Psoas muscle (tissue), 8 donors: ENCODE measurements at regions of chr9 and their contacts with region 1.

Region 1: DNA sequence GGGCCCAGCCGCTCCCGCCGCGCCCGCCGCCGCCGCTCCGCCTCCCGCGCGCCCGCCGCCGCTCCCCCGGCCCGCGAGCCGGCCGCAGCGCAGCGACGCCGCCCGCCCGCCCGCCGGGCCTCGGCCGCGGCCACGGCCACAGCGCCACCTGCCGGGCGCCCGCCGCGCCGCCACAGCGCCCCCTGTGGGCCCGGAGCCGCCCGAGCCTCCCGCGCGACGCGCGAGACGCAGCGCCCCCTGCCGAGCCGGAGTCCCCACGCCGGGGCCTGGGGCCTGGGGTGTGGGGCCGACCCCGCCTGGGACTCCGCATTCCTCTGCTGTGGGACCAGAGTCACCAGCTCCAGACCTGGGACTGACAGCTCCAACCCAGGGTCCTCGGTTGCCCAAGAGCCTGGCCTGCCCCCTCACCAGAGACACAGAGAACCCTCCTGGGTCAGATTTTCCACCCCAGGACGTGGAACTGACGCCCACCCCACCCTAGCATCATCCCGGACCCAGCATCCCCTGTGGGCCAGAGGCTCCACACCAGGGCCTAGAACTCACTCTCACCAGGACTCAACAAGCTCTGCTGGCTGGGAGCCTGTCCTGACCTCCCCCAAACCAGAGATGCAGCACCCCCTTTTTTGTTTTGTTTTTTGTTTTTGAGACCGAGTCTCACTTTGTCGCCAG is at the start of gene RAPGEF1:
- DNase-seq: peak; percentile 80 to 90
- ATAC-seq: peak; percentile 77 to 84 (median 82)
- H3K4me3 ChIP-seq: peak within 1 kb of the TSS; percentile 71
- H3K27ac ChIP-seq: peak within 1 kb of the TSS; percentile 89
- H3K4me1 ChIP-seq: peaks cover 47% of the 10 kb centered on the region
- H3K27me3 ChIP-seq: no peaks in the 10 kb centered on the region
- CTCF ChIP-seq: peak; percentile 93
- total RNA-seq, gene RAPGEF1: 234 to 319 (median 272) TPM

Region 2: GRCh38 chr9:131349881-131350563 is 390.1 kb before region 1 on chr9:
- intact Hi-C with region 1: loop called (anchors 5 to 10 kb)
- DNase-seq: peak; percentile 89 to 94
- ATAC-seq: peak; percentile 85 to 95 (median 86)
- H3K4me3 ChIP-seq: peak overlapping the region; percentile 53
- H3K27ac ChIP-seq: no peak overlapping the region
- H3K4me1 ChIP-seq: peaks cover 17% of the 10 kb centered on the region
- H3K27me3 ChIP-seq: no peaks in the 10 kb centered on the region
- CTCF ChIP-seq: peak; percentile 85

Region 3: GRCh38 chr9:131366761-131367401 is 373.2 kb before region 1 on chr9:
- intact Hi-C with region 1: loop called in 1 of 2 experiments (anchors 10 kb)
- DNase-seq: no peak
- ATAC-seq: peak; percentile 52 to 71 (median 66)
- H3K4me3 ChIP-seq: no peak overlapping the region
- H3K27ac ChIP-seq: no peak overlapping the region
- H3K4me1 ChIP-seq: peaks cover under 1% of the 10 kb centered on the region
- H3K27me3 ChIP-seq: no peaks in the 10 kb centered on the region
- CTCF ChIP-seq: peak; percentile 21

Region 4: DNA sequence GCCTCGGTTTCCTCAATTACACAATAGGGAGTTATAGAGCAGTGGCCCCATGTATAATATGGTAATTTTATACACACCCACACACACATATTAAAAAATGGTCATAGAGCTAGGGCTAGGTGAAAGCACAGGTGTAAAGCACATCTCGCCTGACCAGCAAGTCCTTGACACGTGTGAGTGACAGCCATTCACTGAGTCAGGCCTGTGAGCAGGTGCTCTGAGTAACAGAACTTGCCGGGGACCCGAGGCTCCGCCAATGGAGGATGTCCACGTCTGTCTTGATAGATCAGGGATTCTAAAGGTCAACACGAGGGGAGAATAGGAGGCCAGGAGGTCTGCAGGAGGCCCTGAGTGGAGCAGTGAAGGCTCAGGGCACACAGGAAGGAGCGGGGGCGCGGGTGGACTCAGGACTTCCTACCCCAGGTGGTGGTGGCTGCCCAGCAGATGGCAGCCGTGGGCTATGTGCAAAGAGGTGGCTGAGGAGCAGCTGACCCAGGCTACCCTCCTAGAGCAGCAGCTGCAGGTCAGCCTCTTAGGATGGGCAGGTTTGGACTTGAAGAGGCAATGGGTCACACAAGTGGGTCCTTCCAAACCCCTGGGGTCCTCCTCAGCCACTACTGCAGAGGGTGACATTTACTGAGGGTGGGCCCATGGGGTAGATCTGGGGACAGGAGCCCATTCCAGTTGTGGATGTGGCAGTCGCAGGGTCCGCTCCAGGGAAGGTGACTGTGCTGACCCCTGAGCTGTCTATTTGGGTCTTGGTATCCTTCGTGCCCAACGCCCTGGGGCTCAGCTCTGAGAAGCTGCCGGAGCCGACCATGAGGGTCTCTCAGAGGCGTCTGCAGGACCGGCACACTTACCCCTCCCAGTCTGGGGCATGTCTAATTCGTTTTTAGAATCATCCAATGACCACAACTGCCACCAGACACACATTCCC is 148.9 kb before region 1 on chr9:
- intact Hi-C with region 1: loop called (anchors 1 to 2 kb)
- DNase-seq: peak; percentile 81 to 92
- ATAC-seq: peak; percentile 86 to 93 (median 86)
- H3K4me3 ChIP-seq: no peak overlapping the region
- H3K27ac ChIP-seq: peak overlapping the region; percentile 76
- H3K4me1 ChIP-seq: peaks cover 24% of the 10 kb centered on the region
- H3K27me3 ChIP-seq: no peaks in the 10 kb centered on the region
- CTCF ChIP-seq: peak; percentile 91

Region 5: GRCh38 chr9:131656356-131657036 is 83.6 kb before region 1 on chr9:
- intact Hi-C with region 1: loop called (anchors 2 to 5 kb)
- DNase-seq: peak; percentile 67 to 79
- ATAC-seq: peak; percentile 69 to 81 (median 79)
- H3K4me3 ChIP-seq: no peak overlapping the region
- H3K27ac ChIP-seq: peak overlapping the region; percentile 74
- H3K4me1 ChIP-seq: peaks cover 89% of the 10 kb centered on the region
- H3K27me3 ChIP-seq: no peaks in the 10 kb centered on the region
- CTCF ChIP-seq: no peak

Region 6: DNA sequence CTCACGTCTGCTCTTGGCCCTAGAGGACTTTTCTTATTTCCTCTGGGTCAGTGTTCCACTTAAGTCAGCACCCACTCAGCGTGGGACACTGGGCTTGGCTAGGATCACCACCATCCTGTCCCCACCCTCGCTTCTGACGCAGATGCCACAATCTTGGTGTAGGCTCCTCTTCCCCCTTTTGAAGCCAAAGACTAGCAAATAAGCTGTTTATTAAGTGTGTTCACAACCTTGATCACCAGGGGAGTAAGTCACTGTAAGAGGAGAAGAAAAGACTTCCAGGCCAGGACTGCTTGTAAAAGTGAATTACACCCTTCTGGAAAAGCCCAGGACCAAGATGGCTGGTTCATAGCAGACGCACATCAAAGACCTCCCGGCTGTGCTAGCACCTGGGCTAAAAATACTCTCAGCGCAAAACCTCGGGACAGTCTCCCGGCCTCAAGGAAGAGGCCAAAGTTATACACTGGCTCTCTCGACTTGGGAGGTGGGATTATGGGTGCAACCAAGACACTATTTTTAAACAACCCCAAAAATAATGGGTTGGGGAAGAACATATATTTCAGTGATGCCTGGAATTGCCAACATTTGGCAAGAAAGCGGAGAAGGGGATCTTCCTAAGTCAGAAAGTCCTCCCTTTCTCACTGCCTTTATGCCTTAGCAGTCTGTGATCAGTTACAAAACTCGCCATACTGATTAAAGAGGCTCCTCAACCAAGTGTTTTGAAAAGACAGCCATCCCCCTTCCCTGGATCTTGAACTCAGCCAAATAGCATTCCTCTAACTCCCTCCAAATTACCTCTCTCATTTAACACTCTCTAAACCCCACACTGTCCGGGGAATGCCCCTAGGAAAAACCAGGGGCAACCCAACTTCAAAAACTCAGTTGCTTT is 69.6 kb before region 1 on chr9:
- intact Hi-C with region 1: loop called in 1 of 2 experiments (anchors 5 kb)
- DNase-seq: peak in 1 of 2 donors; percentile 69
- ATAC-seq: peak; percentile 33 to 76 (median 70)
- H3K4me3 ChIP-seq: no peak overlapping the region
- H3K27ac ChIP-seq: peak overlapping the region; percentile 64
- H3K4me1 ChIP-seq: peaks cover 85% of the 10 kb centered on the region
- H3K27me3 ChIP-seq: no peaks in the 10 kb centered on the region
- CTCF ChIP-seq: no peak

Region 7: DNA sequence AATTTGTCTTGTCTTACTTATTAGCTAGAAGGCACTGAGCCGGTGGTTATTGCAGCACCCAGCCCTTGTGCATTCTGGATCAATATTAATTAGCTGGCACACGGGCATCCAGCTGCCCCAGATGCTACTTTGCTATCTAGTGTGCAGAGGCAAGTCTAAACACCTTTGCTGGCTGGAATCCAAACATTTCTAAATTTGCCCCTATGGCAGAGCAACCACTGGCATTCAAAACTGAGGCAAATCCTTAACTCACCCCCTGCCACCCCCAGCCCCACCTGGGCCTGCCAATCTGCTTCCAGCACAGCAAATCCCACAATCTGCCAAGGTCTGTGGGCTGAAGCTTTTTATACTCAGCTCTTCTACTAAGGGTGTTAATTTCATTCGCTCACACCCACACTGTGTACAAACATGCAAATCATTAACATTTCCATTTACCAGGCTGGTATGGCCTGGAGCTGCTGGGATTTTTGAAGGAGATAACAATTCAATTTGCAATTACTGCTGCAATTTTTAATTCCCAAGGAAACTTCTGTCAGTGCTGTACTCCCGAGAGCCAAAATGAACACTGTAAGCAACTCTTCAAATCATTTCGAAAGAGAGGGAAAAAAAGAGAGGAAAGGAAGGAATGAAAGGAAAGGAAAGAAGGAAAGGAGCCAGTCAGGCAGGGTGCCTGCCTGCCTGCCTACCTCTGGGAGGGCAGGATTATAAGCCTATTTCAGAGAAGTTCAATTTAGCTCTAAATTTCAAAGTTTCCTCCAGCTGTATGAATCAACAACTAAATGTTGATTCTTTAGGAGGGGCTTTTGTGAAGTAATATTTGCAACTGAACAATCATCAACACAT is 35.8 kb before region 1 on chr9:
- intact Hi-C with region 1: loop called in 1 of 2 experiments (anchors 5 kb)
- DNase-seq: no peak
- ATAC-seq: no peak
- H3K4me3 ChIP-seq: no peak overlapping the region
- H3K27ac ChIP-seq: peak overlapping the region; percentile 80
- H3K4me1 ChIP-seq: peaks cover 86% of the 10 kb centered on the region
- H3K27me3 ChIP-seq: no peaks in the 10 kb centered on the region
- CTCF ChIP-seq: no peak

Region 8: DNA sequence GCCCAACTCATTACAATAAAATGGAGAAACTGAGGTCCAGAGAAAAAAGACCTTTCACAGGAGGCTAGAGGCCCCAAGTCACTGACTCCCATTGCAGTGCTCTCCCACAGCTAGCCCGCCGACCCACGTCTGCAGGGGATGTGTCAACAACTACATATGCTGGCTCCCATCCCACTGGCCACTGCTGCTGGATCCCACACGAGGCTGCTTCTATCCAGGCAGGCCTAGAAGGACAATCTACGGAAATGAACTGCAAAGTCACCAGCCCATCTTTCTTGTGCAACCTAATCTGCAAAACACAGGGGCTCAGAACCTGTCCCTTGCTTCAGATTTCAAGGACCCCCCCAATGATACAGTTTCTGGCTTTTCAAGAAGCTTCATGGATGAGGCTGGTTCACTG is 24.2 kb before region 1 on chr9:
- intact Hi-C with region 1: no loop called
- DNase-seq: peak in 1 of 2 donors; percentile 48
- ATAC-seq: peak in 1 of 4 donors; percentile 18
- H3K4me3 ChIP-seq: no peak overlapping the region
- H3K27ac ChIP-seq: peak overlapping the region; percentile 68
- H3K4me1 ChIP-seq: peaks cover 58% of the 10 kb centered on the region
- H3K27me3 ChIP-seq: no peaks in the 10 kb centered on the region
- CTCF ChIP-seq: no peak